ENCODE measurements at regions of chr1 and their contacts with region 1.

Region 1: DNA sequence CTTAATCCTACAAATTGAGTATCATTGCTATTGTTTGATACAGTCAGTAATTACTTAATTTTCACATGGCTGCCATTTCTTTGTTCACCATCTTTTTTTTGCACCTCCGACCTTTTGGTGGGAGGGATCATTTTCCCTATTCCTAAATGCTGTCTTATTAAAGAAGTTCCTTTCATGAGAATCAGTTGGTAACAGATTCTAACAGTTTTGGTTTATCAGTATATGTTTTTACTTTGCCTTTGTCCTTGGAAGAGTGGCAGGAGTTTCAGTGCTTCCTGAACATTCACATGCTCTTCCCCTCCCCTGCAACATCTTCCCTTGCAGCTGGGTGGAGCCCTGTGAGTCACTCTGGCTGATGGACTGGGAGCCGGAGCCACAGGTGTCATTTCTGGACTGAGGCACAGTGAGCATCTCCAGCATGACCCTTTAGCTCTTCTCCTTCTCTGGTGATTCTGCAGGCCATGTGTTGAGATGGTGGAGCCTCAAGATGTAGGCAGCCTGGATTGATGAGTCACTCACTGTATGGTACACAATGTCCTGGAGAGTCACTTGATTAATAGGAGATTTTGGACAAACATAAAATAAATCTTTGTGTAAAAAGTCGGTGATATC is 217.7 kb downstream of the URB2 start:
- DNase-seq: peak in 3 of 4 experiments; percentile 26 to 58 (median 51)
- ATAC-seq: peak; percentile 94
- H3K4me3 ChIP-seq: no peak overlapping the region
- H3K27ac ChIP-seq: no peak overlapping the region
- H3K4me1 ChIP-seq: no peaks in the 10 kb centered on the region
- H3K27me3 ChIP-seq: peaks cover 2 to 20% of the 10 kb centered on the region in 2 experiments; a peak in 3 of 5 replicates
- CTCF ChIP-seq: peak; percentile 52 to 58 (median 56)
- EP300 ChIP-seq: no peak
- POLR2A ChIP-seq: no peak
- RAD21 ChIP-seq: peak; percentile 48 to 67

Region 2: GRCh38 chr1:230303822-230304221 is 460.1 kb after region 1 on chr1:
- CTCF ChIA-PET with region 1: no interaction called
- POLR2A ChIA-PET with region 1: no interaction called
- in situ Hi-C with region 1: no loop called
- intact Hi-C with region 1: loop called (anchors 2 kb)
- DNase-seq: no peak
- ATAC-seq: no peak
- H3K4me3 ChIP-seq: no peak overlapping the region
- H3K27ac ChIP-seq: no peak overlapping the region
- H3K4me1 ChIP-seq: no peaks in the 10 kb centered on the region
- H3K27me3 ChIP-seq: peaks cover 54 to 63% of the 10 kb centered on the region in 2 experiments
- CTCF ChIP-seq: no peak
- EP300 ChIP-seq: no peak
- POLR2A ChIP-seq: no peak
- RAD21 ChIP-seq: no peak

Measured in K562 (cell line).